Activated CD8-positive, alpha-beta T cell treated with anti-CD3 and anti-CD28 coated beads for 36 hours (primary cell): ENCODE measurements at regions of chr17 and their contacts with region 1.

Region 1: DNA sequence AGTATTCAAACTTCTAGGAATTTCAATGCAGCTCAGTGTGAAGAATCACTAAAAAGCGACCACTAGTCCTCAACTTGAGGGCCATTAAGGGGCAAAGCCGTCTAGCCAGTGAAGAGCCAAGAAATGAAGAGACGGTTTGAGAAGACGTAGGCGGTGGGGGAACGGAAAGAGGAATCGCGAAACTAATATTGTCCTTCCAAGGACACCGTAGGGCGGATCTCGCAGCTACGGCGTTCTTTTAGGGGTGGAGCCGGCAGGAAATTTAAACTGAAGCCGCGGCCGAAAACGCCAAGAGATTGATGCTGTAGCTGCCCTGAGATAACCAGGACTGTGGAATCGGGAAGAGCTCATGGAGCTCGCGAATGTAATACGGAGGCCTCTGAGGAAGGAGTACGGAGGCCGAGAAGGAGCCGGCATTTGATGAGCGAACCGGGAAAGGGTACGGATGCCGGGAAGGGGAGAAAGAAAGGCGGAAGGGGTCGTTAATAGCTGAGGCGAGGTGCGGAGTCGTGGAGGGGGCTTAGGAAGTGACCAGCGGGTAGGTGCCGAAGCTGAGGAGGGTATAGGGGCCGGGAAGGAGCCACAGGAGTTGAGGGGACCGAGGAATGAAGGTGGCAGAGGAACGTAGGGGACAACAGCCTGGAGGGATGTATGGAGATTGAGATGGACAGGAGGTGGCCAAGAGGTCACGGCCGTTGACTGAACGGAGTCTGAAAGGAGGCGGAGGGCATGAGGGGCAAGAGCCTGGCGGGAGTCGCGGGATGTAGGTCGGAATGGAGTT is at the start of gene DBF4B:
- DNase-seq: peak; percentile 91
- ATAC-seq: peak; percentile 88
- H3K4me3 Mint-ChIP-seq: no peak within 1 kb of the TSS
- H3K27ac Mint-ChIP-seq: no peak within 1 kb of the TSS
- H3K4me1 Mint-ChIP-seq: peaks cover 5% of the 10 kb centered on the region
- H3K27me3 Mint-ChIP-seq: peaks cover 2% of the 10 kb centered on the region
- CTCF ChIP-seq: no peak
- total RNA-seq, gene DBF4B: 23.3 to 25.5 TPM

Region 2: DNA sequence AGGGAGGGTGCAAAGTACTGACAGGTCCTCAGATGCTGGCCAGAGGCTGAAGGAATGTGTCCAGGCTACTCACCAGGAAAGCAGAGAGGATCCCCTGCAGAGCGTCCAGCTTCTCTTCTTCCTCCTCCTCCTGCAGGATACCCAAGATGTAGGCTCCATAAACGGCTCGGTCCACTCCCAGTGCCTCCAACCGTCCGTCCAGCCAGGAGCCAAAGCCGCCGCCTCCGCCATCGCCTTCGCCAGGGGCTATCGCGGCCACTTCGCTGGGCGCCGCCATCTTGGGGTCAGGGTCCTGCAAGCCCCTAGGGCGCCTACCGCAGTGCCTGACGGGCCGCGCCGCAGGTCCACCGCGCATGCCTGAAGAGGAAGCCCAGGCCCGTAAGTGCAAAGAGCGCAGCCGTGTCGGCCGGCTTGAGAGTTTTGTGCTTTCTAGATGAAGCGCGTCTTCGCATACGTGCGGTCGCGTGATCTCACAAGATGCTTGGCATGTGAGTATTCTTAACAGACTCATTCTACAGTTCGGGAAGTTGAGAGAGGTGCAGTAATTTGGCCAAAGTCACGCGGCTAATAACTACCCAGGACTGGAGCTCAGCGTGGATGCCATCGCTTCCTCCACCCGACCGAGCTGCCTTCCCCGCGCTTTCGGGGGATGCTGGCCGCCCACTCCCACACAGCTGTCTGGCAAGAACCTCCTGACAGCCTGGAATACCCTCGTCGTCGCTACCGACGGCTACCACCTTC is 18.9 kb before region 1 on chr17 and contains the start of gene CCDC43:
- CTCF ChIA-PET with region 1: interaction called, 10 read pairs
- POLR2A ChIA-PET with region 1: interaction called, 13 read pairs
- intact Hi-C with region 1: no loop called
- DNase-seq: peak; percentile 95
- ATAC-seq: peak; percentile 99
- H3K4me3 Mint-ChIP-seq: peak within 1 kb of the TSS; percentile 97
- H3K27ac Mint-ChIP-seq: peak within 1 kb of the TSS; percentile 89
- H3K4me1 Mint-ChIP-seq: peaks cover 14% of the 10 kb centered on the region
- H3K27me3 Mint-ChIP-seq: no peaks in the 10 kb centered on the region
- CTCF ChIP-seq: no peak
- total RNA-seq, gene CCDC43: 29.6 to 34.5 TPM

Region 3: GRCh38 chr17:44733753-44734152 is 25.2 kb after region 1 on chr17:
- CTCF ChIA-PET with region 1: no interaction called
- POLR2A ChIA-PET with region 1: no interaction called
- intact Hi-C with region 1: no loop called
- DNase-seq: no peak
- ATAC-seq: no peak
- H3K4me3 Mint-ChIP-seq: no peak overlapping the region
- H3K27ac Mint-ChIP-seq: no peak overlapping the region
- H3K4me1 Mint-ChIP-seq: no peaks in the 10 kb centered on the region
- H3K27me3 Mint-ChIP-seq: no peaks in the 10 kb centered on the region
- CTCF ChIP-seq: no peak